Cardiac septum (tissue), 1 donor: ENCODE measurements at regions of chr5 and their contacts with region 1.

Region 1: GRCh38 chr5:132495667-132496190 is 5.2 kb upstream of the IRF1 start:
- DNase-seq: peak; percentile 94

Region 2: DNA sequence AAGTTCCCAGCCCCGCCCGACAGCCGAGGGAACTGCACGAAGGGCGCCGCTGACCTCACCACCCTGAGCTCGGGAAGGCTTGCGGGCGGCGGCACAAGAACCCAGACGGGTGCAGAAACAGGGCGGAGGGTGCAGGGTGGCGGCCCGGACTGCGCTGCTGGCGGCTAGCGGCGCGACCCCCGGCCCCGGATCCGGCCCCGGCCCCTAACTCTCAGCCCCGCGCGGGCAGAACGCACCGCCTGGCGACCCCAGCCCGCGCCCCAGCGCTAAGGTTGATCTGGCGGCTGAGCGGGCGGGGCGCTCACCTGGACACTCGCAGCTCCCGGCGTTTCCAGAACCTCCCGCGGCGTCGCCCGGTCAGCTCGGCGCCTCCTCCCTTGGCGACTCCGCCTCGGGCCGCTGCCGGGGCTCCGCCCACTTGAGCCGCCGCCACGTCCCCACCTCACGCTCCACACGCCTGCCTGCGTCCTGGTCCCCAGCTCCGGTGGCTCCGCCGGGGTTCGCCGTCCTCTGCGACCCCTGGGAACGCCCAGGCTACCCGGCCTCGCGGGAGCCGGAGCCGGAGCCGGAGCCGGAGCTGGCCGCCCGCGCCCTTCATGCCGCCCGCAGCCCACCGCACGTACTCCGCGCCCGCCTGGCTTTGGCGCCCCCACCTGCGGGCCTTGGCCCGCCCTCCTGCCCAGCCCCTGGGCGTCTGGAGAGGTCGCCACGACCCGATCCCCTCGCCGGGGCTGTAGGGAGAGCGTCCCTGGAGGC is 268.1 kb before region 1 on chr5 and contains the start of gene P4HA2:
- intact Hi-C with region 1: loop called (anchors 5 kb)
- DNase-seq: peak; percentile 93
- total RNA-seq, gene P4HA2: 50.5 TPM

Region 3: DNA sequence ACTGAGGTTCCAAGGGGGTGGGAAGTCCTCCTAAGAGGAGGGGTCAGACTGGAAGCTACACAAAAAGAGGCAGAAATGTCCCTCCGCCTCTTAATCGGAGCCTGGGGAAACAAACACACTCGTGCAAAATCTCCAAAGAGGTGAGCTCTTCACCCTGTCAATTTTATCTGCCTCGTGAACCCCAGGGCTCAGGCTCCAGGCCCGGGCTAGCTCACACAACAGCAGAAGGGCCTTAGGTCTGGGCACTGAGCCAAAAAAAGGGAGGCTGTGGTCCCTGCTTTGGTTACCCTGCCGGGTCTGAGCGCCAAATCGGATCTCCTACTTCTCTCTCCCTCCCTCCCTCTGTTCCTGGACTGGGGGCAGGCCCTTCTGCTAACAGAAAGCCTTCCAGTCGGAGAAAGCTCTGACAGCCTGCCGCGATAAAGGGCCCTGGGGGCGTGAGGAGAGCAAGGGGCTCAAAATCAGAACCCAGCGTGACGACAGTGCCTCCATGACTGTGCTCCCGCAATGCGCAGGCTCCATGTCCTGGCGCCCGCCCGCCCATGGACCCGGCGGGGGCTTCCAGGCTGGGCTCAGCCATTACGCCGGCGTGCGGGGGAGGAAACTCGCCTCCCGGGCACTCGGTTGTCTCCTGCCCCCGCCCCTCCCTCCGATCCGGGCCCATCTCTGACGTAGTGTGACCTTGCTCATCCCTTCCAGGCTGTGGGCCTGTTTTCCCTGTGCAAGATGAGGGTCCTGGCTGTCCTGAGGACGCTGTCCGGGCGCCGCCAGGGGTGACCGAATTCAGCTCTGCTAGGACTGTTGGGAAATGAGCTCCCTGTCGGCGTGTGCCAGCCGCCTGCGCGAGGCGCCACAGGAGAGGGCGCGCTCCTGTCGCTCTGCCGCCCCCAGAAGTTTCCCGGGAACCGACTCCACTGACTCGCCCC is 202.4 kb before region 1 on chr5:
- intact Hi-C with region 1: loop called (anchors 5 kb)
- DNase-seq: peak; percentile 94

Region 4: GRCh38 chr5:132410451-132411381 is 85.0 kb before region 1 on chr5:
- intact Hi-C with region 1: loop called (anchors 2 kb)
- DNase-seq: peak; percentile 94

Region 5: GRCh38 chr5:132419502-132420468 is 75.9 kb before region 1 on chr5:
- intact Hi-C with region 1: loop called (anchors 2 kb)
- DNase-seq: peak; percentile 90

Region 6: GRCh38 chr5:132591145-132591544 is 95.4 kb after region 1 on chr5:
- intact Hi-C with region 1: no loop called
- DNase-seq: no peak